Right ventricle myocardium superior (tissue), 1 donor: ENCODE measurements at regions of chr11 and their contacts with region 1.

Region 1: GRCh38 chr11:124763156-124763947 is 1.3 kb upstream of the ESAM start:
- DNase-seq: peak; percentile 93
- ATAC-seq: peak; percentile 59

Region 2: DNA sequence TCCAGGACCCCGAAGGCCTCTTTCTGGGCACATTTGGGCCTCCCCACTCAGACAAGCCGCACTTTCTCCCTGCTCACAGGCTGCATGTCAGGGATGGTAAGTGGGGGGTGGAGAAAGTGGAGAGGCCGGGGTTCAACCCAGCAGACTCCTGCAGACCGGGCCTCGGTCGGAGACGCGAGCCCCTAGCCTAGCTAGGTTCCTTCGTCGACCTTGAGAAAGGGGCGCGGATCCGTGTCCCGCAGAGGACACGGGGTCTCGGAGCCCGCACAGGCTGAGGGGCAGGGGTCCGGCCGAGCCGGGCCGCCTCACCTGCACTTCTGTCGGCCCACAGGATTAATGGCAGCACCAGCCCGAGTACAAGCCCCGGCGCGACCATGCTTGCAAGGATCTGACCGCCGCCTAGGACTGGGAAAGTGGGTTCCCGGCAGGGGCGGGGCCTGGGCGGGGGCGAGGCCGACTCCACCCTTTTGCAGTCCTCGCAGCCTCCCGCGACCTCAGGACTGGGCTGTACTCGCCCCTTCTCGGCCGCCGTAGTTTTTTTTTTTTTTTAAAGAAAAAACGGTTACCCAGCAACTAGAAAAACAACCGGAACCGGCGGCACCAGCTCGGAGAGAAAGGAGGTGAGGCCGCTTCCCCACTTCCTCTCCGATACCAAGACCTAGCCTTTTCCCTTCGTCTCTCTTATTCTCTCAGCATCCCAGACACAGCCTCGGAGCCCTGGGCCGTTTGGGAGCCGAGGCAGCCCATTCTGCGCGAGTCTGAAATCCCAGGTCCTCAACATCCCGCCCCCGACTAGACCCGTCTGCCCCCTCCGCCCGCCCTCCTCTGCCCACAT is 89.8 kb before region 1 on chr11 and contains the starts of genes SIAE and SPA17:
- intact Hi-C with region 1: loop called (anchors 5 kb)
- DNase-seq: peak; percentile 96
- ATAC-seq: peak; percentile 100
- total RNA-seq, gene SIAE: 83.4 TPM
- total RNA-seq, gene SPA17: 2.7 TPM

Region 3: GRCh38 chr11:125224391-125225010 is 461.1 kb after region 1 on chr11:
- intact Hi-C with region 1: no loop called
- DNase-seq: peak; percentile 56
- ATAC-seq: peak; percentile 71